Gastrocnemius medialis (tissue), 4 donors: ENCODE measurements at regions of chr11 and their contacts with region 1.

Region 1: GRCh38 chr11:747158-748006 is at the start of gene TALDO1:
- DNase-seq: peak; percentile 83 to 88
- ATAC-seq: peak; percentile 91 to 92
- H3K4me3 ChIP-seq: peak within 1 kb of the TSS; percentile 67 to 99 (median 85)
- H3K27ac ChIP-seq: peak within 1 kb of the TSS; percentile 78 to 98 (median 93)
- H3K4me1 ChIP-seq: peaks cover 13 to 16% of the 10 kb centered on the region in 2 donors
- H3K27me3 ChIP-seq: no peaks in the 10 kb centered on the region
- CTCF ChIP-seq: peak in 4 of 5 experiments; percentile 9 to 46 (median 27)
- POLR2A ChIP-seq: peak; percentile 77 to 92
- total RNA-seq, gene TALDO1: 98.6 to 167 (median 153) TPM

Region 2: GRCh38 chr11:695538-696248 is 51.7 kb before region 1 on chr11 and contains the start of gene TMEM80:
- in situ Hi-C with region 1: no loop called
- intact Hi-C with region 1: loop called (anchors 5 kb)
- DNase-seq: peak; percentile 99
- ATAC-seq: peak; percentile 72 to 74
- H3K4me3 ChIP-seq: peak within 1 kb of the TSS; percentile 77 to 92 (median 89)
- H3K27ac ChIP-seq: peak within 1 kb of the TSS; percentile 92 to 100 (median 98)
- H3K4me1 ChIP-seq: peaks cover 33 to 35% of the 10 kb centered on the region in 2 donors
- H3K27me3 ChIP-seq: no peaks in the 10 kb centered on the region
- CTCF ChIP-seq: no peak
- POLR2A ChIP-seq: peak; percentile 69 to 72
- total RNA-seq, gene TMEM80: 3.2 to 22.3 (median 14.3) TPM

Region 3: DNA sequence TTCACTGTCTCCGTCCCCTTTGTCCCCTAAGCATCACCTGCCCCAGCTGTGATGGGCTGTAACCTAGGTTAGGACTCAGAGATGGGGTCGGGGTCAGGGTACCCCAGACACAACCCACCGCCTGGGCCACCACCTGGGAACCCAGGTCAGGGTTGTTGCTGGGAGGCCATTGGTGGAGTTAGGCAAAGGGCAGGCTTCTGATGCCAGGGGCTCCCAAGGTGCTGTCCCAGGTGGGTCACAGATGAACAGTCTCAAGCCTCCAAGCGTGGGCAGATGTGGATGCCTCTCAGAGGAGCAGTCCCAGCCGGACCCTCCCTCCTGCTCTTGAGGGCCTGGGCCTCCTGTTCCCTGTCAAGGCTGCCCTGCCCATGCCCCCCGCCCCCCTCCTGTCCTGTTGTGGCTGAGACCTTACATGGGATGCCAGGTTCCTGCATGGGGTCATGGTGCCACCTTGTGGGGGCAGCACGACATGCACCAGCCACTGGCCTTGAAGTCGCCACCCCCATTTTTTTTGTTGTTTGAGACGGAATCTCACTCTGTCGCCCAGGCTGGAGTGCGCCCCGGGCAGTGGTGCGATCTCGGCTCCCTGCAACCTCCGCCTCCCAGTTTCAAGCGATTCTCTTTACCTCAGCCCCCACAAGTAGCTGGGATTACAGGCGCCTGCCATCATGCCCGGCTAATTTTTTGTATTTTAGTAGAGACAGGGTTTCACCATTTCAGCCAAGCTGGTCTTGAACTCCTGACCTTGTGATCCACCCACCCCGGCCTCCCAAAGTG is 17.8 kb after region 1 on chr11:
- in situ Hi-C with region 1: no loop called
- intact Hi-C with region 1: loop called (anchors 2 kb)
- DNase-seq: peak in 1 of 2 donors; percentile 54
- ATAC-seq: peak in 1 of 2 donors; percentile 60
- H3K4me3 ChIP-seq: no peak overlapping the region
- H3K27ac ChIP-seq: no peak overlapping the region
- H3K4me1 ChIP-seq: no peaks in the 10 kb centered on the region
- H3K27me3 ChIP-seq: no peaks in the 10 kb centered on the region
- CTCF ChIP-seq: peak; percentile 61 to 77 (median 65)
- POLR2A ChIP-seq: no peak

Region 4: DNA sequence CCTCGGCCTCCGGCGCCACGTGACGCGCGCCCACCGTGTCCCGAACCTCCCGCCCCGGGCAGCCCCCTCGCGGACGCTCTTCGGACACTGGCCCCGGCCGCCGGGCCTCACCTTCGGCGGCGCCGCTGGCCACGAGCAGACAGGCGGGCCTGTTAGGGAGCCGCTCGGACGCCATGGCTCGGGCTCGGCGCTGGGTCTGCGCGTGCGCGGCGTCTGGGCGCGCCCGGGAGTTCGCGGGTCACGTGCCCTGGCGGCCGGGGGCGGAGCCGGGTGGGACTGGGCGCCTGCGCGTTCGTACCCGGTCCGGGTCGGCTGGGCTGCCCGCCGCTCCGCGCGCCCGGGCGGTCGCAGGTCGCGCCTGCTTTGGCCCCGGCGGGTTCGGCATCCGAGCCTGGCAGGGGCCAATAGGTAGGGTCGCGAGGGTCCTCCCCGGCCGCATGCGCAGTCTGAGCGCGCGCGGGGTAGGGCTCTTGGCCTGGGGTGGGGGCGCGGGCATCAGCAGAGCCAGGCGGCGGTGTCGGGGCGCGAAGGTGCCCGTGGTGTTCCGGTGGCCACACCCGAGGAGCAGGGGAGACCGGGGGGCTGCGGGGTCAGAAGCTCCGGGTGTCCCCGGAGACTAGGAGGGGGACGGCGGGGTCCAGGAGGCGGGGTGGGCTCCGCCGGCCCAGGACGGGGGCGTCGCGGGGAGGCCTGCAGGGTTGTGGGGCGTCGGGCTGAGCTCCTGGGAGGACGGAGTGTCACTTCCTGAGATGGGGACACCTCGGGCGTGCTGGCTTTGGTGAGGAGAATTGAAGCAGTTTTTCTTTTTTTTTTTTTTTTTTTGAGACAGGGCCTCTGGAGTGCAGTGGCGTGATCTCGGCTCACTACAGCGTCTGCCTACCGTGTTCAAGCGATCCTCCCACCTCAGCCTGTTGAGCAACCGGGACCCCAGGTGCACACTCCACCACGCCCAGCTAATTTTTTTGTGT is 30.2 kb after region 1 on chr11 and contains the start of gene GATD1:
- in situ Hi-C with region 1: no loop called
- intact Hi-C with region 1: loop called (anchors 1 kb)
- DNase-seq: peak; percentile 85 to 88
- ATAC-seq: peak; percentile 92 to 93
- H3K4me3 ChIP-seq: peak within 1 kb of the TSS; percentile 77 to 98 (median 96)
- H3K27ac ChIP-seq: peak within 1 kb of the TSS; percentile 84 to 92 (median 89)
- H3K4me1 ChIP-seq: peaks cover 17 to 29% of the 10 kb centered on the region in 2 donors
- H3K27me3 ChIP-seq: no peaks in the 10 kb centered on the region
- CTCF ChIP-seq: peak in 2 of 5 experiments; percentile 29 to 34
- POLR2A ChIP-seq: peak; percentile 86 to 92
- total RNA-seq, gene GATD1: 3.5 to 10.6 (median 9.4) TPM

Region 5: GRCh38 chr11:798093-798713 is 50.8 kb after region 1 on chr11 and contains the start of gene SLC25A22:
- in situ Hi-C with region 1: no loop called
- intact Hi-C with region 1: loop called (anchors 1 kb)
- DNase-seq: peak in 1 of 2 donors; percentile 57
- ATAC-seq: peak; percentile 67 to 79
- H3K4me3 ChIP-seq: peak within 1 kb of the TSS; percentile 64 to 71 (median 68)
- H3K27ac ChIP-seq: peak within 1 kb of the TSS; percentile 57 to 69 (median 64)
- H3K4me1 ChIP-seq: peaks cover 11 to 35% of the 10 kb centered on the region in 2 donors
- H3K27me3 ChIP-seq: peaks cover 10 to 24% (median 23%) of the 10 kb centered on the region in 3 donors
- CTCF ChIP-seq: peak; percentile 73 to 97 (median 92)
- POLR2A ChIP-seq: no peak
- total RNA-seq, gene SLC25A22: 0.80 to 1.5 (median 1.0) TPM in 3 of 4 donors, not detected in the other

Region 6: GRCh38 chr11:1181867-1182535 is 434.6 kb after region 1 on chr11:
- in situ Hi-C with region 1: no loop called
- intact Hi-C with region 1: no loop called
- DNase-seq: no peak
- ATAC-seq: no peak
- H3K4me3 ChIP-seq: no peak overlapping the region
- H3K27ac ChIP-seq: no peak overlapping the region
- H3K4me1 ChIP-seq: no peaks in the 10 kb centered on the region
- H3K27me3 ChIP-seq: no peaks in the 10 kb centered on the region
- CTCF ChIP-seq: no peak
- POLR2A ChIP-seq: no peak